Naive thymus-derived CD4-positive, alpha-beta T cell (primary cell): ENCODE measurements at regions of chr17 and their contacts with region 1.

Region 1: GRCh38 chr17:68291844-68292695 is 775 bp downstream of the ARSG start:
- DNase-seq: peak; percentile 80 to 98 (median 96)
- ATAC-seq: peak; percentile 83
- H3K4me3 ChIP-seq: peak overlapping the region; percentile 92
- H3K4me3 Mint-ChIP-seq: peak overlapping the region; percentile 82 to 100 (median 88)
- H3K27ac ChIP-seq: peak overlapping the region; percentile 95
- H3K27ac Mint-ChIP-seq: peak overlapping the region; percentile 83 to 99 (median 91)
- H3K4me1 ChIP-seq: peaks cover 53% of the 10 kb centered on the region in 2 donors
- H3K4me1 Mint-ChIP-seq: peaks cover 46 to 79% (median 69%) of the 10 kb centered on the region in 7 donors
- H3K27me3 ChIP-seq: no peaks in the 10 kb centered on the region
- H3K27me3 Mint-ChIP-seq: peaks cover 0 to 16% (median 0%) of the 10 kb centered on the region in 5 donors

Region 2: GRCh38 chr17:68035523-68036303 is 256.4 kb before region 1 on chr17 and contains the start of gene KPNA2:
- CTCF ChIA-PET with region 1: no interaction called
- POLR2A ChIA-PET with region 1: no interaction called
- intact Hi-C with region 1: loop called in 1 of 2 experiments (anchors 1 kb)
- DNase-seq: peak; percentile 70 to 95 (median 91)
- ATAC-seq: peak; percentile 94
- H3K4me3 ChIP-seq: peak within 1 kb of the TSS; percentile 71
- H3K4me3 Mint-ChIP-seq: peak within 1 kb of the TSS; percentile 83 to 97 (median 91)
- H3K27ac ChIP-seq: peak within 1 kb of the TSS; percentile 91
- H3K27ac Mint-ChIP-seq: peak within 1 kb of the TSS; percentile 83 to 97 (median 92)
- H3K4me1 ChIP-seq: peaks cover 8 to 16% of the 10 kb centered on the region in 2 donors
- H3K4me1 Mint-ChIP-seq: peaks cover 6 to 32% (median 15%) of the 10 kb centered on the region in 7 donors
- H3K27me3 ChIP-seq: no peaks in the 10 kb centered on the region
- H3K27me3 Mint-ChIP-seq: peaks cover 0 to 3% (median 0%) of the 10 kb centered on the region in 5 donors
- total RNA-seq, gene KPNA2: 8.4 to 161 (median 45.9) TPM

Region 3: DNA sequence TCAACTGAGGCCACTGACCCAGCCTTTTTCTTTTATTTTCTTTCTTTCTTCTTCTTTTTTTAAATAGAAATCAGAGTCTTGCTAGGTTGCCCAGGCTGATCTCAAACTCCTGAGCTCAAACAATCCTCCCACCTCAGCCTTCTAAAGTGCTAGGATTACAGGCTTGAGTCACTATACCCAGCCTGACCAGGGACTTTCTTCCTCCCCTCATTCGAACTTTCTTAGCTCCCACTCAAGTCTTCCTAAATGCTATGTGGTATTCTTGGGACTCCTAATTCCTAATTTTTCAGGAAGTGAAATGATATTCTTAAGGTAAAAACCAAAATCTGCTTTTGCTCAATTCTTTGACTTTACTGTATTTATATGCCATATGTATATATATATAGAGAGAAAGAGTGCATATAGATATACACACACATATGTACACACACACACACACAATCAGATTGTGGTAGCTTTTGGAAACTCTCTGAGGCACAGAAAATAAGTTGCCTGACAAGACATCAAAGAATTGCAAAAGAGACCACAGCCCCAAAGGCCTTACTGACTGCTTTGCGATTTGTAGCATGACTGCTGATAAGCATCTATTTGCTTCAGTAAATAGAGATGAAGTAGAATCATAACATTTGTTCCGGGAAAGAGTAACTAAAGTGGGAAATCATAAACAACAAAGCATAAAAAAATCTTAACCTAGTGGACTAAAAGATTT is 53.8 kb before region 1 on chr17:
- CTCF ChIA-PET with region 1: no interaction called
- POLR2A ChIA-PET with region 1: interaction called, 7 read pairs
- intact Hi-C with region 1: loop called in 1 of 2 experiments (anchors 2 kb)
- DNase-seq: peak in 5 of 9 donors; percentile 12 to 70 (median 51)
- ATAC-seq: peak; percentile 8
- H3K4me3 ChIP-seq: peak overlapping the region; percentile 61
- H3K4me3 Mint-ChIP-seq: peak overlapping the region; percentile 77 to 91 (median 86)
- H3K27ac ChIP-seq: peak overlapping the region; percentile 79
- H3K27ac Mint-ChIP-seq: peak overlapping the region; percentile 94 to 99 (median 97)
- H3K4me1 ChIP-seq: peaks cover 21 to 61% of the 10 kb centered on the region in 2 donors
- H3K4me1 Mint-ChIP-seq: peaks cover 31 to 58% (median 41%) of the 10 kb centered on the region in 7 donors
- H3K27me3 ChIP-seq: no peaks in the 10 kb centered on the region
- H3K27me3 Mint-ChIP-seq: no peaks in the 10 kb centered on the region

Region 4: DNA sequence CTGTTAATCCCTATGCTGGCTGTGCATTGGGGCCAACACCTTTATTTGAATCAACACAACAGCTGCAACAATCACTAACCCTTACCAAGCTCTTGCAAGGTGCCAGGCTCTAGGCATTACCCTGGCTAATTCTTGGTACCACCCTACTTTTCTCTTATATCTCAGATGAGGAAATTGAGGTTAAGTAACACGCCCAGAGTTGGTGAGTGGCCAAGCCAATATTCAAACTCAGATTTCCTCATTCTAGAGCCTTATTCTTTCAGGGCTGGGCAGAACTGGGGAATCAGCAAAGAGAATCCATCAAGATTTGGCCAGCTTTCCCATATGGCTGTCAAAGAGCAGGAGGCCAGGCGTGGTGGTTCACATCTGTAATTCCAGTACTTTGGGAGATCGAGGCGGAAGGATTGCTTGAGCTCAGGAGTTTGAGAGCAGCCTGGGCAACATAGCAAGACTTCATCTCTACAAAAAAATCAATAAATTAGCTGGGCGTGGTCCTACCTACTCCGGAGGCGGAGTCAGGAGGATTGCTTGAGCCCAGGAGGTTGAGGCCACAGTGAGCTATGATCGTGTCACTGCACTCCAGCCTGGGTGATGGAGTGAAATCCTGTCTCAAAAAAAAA is 23.0 kb after region 1 on chr17:
- CTCF ChIA-PET with region 1: interaction called, 3 read pairs
- POLR2A ChIA-PET with region 1: interaction called, 12 read pairs
- intact Hi-C with region 1: loop called in 1 of 2 experiments (anchors 1 kb)
- DNase-seq: peak in 4 of 9 donors; percentile 20 to 40 (median 24)
- ATAC-seq: peak; percentile 47
- H3K4me3 ChIP-seq: peak overlapping the region; percentile 22
- H3K4me3 Mint-ChIP-seq: peak overlapping the region; percentile 52 to 83 (median 70)
- H3K27ac ChIP-seq: no peak overlapping the region
- H3K27ac Mint-ChIP-seq: peak overlapping the region; percentile 4 to 82 (median 53)
- H3K4me1 ChIP-seq: peaks cover 42% of the 10 kb centered on the region in 2 donors
- H3K4me1 Mint-ChIP-seq: peaks cover 40 to 82% (median 61%) of the 10 kb centered on the region in 7 donors
- H3K27me3 ChIP-seq: no peaks in the 10 kb centered on the region
- H3K27me3 Mint-ChIP-seq: no peaks in the 10 kb centered on the region

Region 5: GRCh38 chr17:68420065-68420464 is 128.0 kb after region 1 on chr17:
- CTCF ChIA-PET with region 1: interaction called, 3 read pairs
- POLR2A ChIA-PET with region 1: interaction called, 50 read pairs
- intact Hi-C with region 1: loop called in 1 of 2 experiments (anchors 2 kb)
- DNase-seq: no peak
- ATAC-seq: no peak
- H3K4me3 ChIP-seq: no peak overlapping the region
- H3K4me3 Mint-ChIP-seq: no peak overlapping the region
- H3K27ac ChIP-seq: no peak overlapping the region
- H3K27ac Mint-ChIP-seq: peak overlapping the region in 2 of 9 donors; percentile 45 to 55
- H3K4me1 ChIP-seq: peaks cover 0 to 9% of the 10 kb centered on the region in 2 donors
- H3K4me1 Mint-ChIP-seq: peaks cover 5 to 30% (median 22%) of the 10 kb centered on the region in 7 donors
- H3K27me3 ChIP-seq: no peaks in the 10 kb centered on the region
- H3K27me3 Mint-ChIP-seq: no peaks in the 10 kb centered on the region

Region 6: DNA sequence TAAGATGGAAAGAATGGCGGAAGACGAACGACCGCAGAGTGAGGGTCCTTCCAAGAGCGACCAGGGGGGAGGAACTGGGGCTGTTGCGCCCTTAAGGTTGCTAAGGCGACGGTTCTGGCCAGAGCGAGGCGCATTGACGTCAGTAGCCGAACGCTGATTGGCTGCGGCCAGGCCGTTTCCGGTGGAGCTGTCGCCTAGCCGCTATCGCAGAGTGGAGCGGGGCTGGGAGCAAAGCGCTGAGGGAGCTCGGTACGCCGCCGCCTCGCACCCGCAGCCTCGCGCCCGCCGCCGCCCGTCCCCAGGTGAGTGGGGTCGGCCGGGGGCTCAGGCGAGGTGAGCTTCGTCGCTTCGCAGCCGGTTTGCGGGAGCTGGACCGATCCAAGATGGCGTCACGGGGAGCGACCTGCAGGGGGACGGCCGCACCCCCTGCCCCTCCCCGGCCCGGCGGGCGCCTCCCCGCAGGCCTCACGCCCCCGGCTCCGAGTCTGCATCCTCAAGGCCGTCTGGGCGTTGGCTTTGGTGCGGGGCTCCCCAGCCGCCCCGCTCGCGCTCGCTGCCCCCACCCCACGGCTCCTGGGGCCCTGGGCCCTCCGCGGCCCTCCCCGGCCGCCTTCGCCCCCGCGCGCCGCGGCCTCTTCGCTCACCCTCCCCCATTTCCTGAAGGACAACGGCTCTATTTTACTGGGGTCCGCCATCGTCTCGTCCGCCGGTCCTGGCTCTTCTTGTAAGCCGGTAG is 220.3 kb after region 1 on chr17 and contains the start of gene PRKAR1A:
- CTCF ChIA-PET with region 1: no interaction called
- POLR2A ChIA-PET with region 1: interaction called, 5 read pairs
- intact Hi-C with region 1: loop called in 1 of 2 experiments (anchors 1 kb)
- DNase-seq: peak; percentile 84 to 96 (median 94)
- ATAC-seq: peak; percentile 92
- H3K4me3 ChIP-seq: peak within 1 kb of the TSS; percentile 97
- H3K4me3 Mint-ChIP-seq: peak within 1 kb of the TSS; percentile 89 to 100 (median 100)
- H3K27ac ChIP-seq: peak within 1 kb of the TSS; percentile 98
- H3K27ac Mint-ChIP-seq: peak within 1 kb of the TSS; percentile 91 to 100 (median 100)
- H3K4me1 ChIP-seq: peaks cover 13 to 22% of the 10 kb centered on the region in 2 donors
- H3K4me1 Mint-ChIP-seq: peaks cover 34 to 74% (median 51%) of the 10 kb centered on the region in 7 donors
- H3K27me3 ChIP-seq: no peaks in the 10 kb centered on the region
- H3K27me3 Mint-ChIP-seq: no peaks in the 10 kb centered on the region
- total RNA-seq, gene PRKAR1A: 115 to 224 (median 156) TPM